Right ventricle myocardium inferior (tissue), 1 donor: ENCODE measurements at regions of chr3 and their contacts with region 1.

Region 1: DNA sequence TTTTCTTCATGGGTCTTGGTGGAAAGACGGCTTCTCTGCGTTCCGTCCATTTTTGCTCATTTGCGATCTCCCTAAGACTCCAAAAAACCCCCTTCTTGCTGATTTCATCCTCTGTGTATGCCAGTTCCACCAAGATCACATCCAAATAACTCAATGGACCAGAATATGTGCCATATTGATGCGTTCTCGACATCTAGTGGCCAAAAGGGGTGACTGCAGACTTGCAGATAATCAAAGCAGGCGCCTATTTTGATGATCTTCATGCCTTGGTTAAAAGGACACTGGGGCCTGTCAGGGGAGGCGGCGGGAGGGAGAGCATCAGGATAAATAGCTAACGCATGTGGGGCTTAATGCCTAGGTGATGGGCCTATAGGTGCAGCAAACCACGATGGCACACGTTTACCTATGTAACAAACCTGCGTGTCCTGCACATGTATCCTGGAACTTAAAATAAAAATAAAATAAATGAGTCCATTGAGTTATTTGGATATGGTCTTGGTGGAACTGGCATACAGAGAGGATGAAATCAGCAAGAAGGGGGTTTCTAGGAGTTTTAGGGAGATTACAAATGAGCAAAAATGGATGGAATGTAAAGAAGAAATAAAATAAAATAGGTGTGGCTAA is 104.2 kb upstream of the RAD18 start:
- DNase-seq: no peak
- ATAC-seq: peak; percentile 85

Region 2: GRCh38 chr3:8970971-8971589 is 96.4 kb before region 1 on chr3:
- intact Hi-C with region 1: loop called (anchors 2 kb)
- DNase-seq: no peak
- ATAC-seq: peak; percentile 59

Region 3: DNA sequence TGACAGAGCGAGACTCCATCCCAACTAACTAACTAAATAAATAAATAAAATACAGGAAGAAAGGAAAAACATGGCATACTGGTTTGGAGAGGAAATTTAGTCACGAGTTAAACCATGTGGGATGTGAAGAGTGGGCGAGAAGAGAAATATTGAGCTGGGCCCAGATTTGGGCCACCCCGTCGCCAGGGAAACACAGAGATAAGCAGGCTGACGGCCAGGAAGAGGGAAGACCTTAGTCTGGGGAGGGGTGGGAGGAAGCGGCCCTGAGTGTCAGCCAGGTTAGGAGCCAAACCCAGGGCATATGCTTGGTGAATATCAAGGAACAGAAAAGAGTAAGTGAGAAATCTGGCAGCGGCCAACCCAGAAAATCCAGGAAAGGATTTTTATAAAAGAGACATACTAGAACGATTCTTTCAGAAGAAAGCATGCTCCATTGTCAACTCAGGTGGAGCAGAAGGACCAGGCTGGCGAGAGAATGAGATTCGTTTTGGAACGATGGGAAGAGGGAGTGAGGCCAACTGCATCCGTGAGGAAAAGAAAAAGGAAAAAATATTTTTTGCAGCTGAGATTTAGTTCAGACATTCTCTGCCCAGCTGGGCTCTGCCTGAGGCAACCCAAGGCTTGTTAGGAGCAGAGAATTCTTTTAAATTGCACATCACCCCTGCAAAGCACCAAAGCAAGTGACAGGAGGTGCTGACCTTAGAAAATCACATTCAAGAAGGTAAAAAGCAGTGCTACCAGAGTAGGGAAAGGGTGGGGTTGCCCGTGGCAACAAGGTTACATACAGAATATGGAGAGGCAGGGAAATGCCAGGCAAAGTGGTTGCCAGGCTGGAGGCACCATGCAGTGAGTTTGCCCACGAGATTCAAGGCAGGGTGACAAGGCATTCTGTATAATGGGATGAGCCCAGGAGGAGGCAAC is 44.9 kb before region 1 on chr3:
- intact Hi-C with region 1: no loop called
- DNase-seq: no peak
- ATAC-seq: no peak